ENCODE measurements at regions of chr3 and their contacts with region 1.

Region 1: GRCh38 chr3:77535116-77535515 is 495.2 kb downstream of the ROBO2 start:
- DNase-seq: no peak
- ATAC-seq: no peak
- H3K4me3 ChIP-seq: no peak overlapping the region
- H3K27ac ChIP-seq: no peak overlapping the region
- H3K4me1 ChIP-seq: no peaks in the 10 kb centered on the region
- H3K27me3 ChIP-seq: no peaks in the 10 kb centered on the region
- CTCF ChIP-seq: no peak
- POLR2A ChIP-seq: no peak
- RAD21 ChIP-seq: no peak

Region 2: DNA sequence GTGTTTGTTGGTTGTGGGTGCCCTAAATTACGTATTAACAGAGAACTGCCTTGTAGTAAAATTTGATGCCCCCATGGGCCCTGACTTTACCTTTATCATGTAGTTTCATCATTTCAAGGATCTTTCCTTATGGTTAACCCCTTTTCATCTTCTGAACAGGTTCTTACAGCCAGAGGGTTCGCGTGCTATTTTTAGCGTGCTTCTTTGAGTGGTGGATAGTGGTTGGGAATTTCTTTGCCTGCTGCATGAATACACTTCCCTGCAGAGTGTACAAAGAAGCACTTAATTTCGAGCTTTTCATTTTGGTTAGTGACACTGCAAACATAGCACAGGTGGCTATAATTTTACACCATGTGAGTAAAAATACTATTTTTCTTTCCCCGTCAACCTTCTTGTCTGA is 263.4 kb before region 1 on chr3:
- CTCF ChIA-PET with region 1: interaction called, 16 read pairs
- POLR2A ChIA-PET with region 1: no interaction called
- dilution Hi-C with region 1: no loop called
- in situ Hi-C with region 1: no loop called
- intact Hi-C with region 1: no loop called
- DNase-seq: no peak
- ATAC-seq: no peak
- H3K4me3 ChIP-seq: no peak overlapping the region
- H3K27ac ChIP-seq: no peak overlapping the region
- H3K4me1 ChIP-seq: no peaks in the 10 kb centered on the region
- H3K27me3 ChIP-seq: no peaks in the 10 kb centered on the region
- CTCF ChIP-seq: no peak
- POLR2A ChIP-seq: no peak
- RAD21 ChIP-seq: no peak

Measured in IMR-90 (cell line).